Thyroid gland (tissue), 4 donors: ENCODE measurements at regions of chr12 and their contacts with region 1.

Region 1: DNA sequence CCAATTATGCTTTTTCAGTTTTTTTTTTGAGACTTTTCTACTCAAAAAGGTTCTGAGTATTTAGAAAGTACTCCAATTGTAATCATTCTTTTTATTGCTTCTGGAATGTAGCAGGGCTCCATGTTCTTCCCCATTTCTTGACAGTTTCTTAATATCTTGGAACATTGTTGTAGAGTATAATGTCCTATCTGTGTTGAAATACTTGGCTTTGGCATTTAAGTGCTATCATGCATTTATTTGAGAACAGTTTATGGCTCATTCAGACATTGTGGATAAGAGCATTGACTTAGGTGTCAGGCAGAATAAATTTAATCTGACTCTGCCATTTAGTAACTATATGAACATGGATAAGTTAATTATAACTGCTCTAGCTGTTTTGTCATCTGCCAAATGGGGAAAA is 28.3 kb downstream of the ADIPOR2 start:
- DNase-seq: no peak
- H3K4me3 ChIP-seq: no peak overlapping the region
- H3K27ac ChIP-seq: no peak overlapping the region
- H3K4me1 ChIP-seq: peaks cover 24 to 36% of the 10 kb centered on the region in 2 donors
- H3K27me3 ChIP-seq: no peaks in the 10 kb centered on the region
- CTCF ChIP-seq: no peak
- POLR2A ChIP-seq: no peak

Region 2: DNA sequence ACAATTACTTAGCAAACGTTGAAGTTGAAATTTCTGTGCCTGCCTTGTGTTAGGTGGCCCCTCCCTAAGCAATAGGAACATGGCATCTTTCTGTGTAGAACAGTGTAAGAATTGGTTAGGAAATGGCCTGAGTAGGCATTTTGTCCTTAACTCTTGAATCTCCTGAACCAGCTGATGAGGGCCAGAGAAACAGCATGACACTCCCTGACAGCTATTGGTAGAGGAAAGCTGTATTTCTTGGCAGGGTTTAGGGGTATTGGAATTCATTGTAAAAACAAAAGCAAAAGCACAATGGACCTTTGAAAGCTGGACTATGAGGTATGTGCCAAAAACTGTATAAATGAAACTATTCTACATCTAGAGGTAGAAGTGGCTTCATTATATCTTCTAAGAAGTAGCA is 60.6 kb after region 1 on chr12:
- intact Hi-C with region 1: loop called (anchors 10 kb)
- DNase-seq: no peak
- H3K4me3 ChIP-seq: no peak overlapping the region
- H3K27ac ChIP-seq: peak overlapping the region; percentile 13 to 85 (median 73)
- H3K4me1 ChIP-seq: peaks cover 48 to 53% of the 10 kb centered on the region in 2 donors
- H3K27me3 ChIP-seq: no peaks in the 10 kb centered on the region
- CTCF ChIP-seq: no peak
- POLR2A ChIP-seq: no peak